SK-MEL-5 (cell line): ENCODE measurements at regions of chr1 and their contacts with region 1.

Region 1: GRCh38 chr1:244012202-244012601 is 38.9 kb upstream of the ZBTB18 start:
- DNase-seq: no peak

Region 2: GRCh38 chr1:244065960-244066388 is 53.8 kb after region 1 on chr1:
- in situ Hi-C with region 1: loop called (anchors 10 kb)
- DNase-seq: no peak